ENCODE measurements at regions of chr13 and their contacts with region 1.

Region 1: DNA sequence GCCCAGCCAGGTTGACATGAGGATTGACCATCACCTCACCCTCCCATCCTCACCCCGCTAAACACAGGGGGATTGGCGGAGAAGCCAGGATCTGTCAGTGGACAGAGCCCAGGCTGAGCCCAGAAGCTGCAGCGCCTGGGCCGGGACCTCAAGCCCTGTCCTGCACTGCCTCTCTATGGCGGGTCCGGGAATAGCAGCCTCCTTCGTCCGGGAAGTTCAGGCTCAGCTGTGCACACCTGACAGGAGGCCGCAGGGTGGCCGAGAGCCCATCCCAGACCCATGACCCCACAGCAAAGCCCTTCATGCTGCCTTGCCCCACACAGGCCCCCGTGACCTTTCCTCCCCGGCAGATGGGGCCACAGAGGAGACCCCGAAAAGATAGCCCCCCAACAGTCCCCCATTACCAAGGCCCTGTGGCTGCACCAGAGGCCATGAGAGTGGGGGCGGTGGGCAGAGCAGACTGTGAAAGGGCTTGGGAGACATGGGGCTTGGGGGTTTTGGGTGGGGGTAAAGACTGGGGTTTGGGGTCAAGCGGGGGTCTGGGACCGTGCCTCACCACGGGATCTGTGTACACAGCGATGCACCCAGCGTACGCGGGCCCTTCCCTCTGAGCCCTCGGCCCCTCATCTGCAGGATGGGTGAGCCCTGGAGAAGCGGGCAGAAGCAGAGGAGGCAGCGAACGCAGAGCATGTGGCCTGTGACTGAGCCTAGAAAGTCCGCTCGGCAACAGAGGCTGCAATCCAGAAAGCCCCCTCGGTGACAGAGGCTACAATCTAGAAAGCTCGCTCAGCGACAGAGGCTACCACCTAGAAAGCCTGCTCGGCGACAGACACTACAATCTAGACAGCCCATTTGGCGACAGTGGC is 68.1 kb downstream of the SPACA7 start:
- DNase-seq: no peak
- H3K4me3 ChIP-seq: no peak overlapping the region
- H3K27ac ChIP-seq: no peak overlapping the region
- H3K4me1 ChIP-seq: peaks cover 0 to 12% (median 0%) of the 10 kb centered on the region in 3 donors
- H3K27me3 ChIP-seq: peaks cover 0 to 93% (median 0%) of the 10 kb centered on the region in 4 donors
- CTCF ChIP-seq: peak; percentile 32 to 91 (median 76)
- POLR2A ChIP-seq: no peak

Region 2: DNA sequence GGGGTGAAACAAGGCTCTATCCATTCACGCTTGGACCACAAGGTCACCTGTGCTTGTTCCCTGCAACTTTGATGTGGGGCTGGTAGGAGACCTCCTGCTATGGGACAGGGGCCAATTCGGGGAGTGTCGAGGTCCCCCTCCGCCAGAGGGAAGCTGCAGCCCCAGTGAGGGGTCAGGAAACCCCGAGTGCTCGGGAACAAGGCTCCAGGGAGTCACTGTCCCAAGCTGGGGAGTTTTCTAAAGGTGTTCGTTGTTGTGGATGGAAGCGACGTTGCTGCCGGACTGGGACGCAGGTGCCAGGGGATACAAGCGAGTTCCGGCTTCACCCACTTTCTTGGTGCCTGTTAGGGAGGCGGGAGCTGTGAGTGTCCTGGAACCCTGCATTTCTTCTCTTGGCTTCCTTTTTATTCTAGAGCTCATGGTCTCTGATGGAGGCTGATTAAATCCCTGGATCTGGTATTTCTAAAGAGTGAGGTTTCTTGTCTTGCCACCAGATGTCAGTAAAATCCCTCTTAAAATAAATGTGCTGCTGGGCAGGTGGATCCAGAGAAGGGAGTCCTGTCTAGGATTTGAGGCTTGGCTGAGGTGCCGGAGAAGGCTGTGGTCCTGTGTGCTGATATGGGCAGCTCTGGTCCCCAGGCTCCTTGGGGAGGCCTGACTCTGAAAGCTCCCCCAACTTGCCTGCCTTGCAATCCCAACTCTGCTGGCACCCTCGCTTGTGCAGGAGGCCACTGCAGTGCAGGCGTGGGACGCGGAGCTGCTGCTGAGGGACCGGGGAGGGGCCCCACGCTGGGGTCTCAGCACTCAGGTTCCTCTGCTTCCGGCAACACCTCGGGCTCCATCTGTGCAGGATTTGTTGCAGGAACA is 969.9 kb before region 1 on chr13:
- intact Hi-C with region 1: loop called (anchors 2 kb)
- DNase-seq: no peak
- H3K4me3 ChIP-seq: no peak overlapping the region
- H3K27ac ChIP-seq: no peak overlapping the region
- H3K4me1 ChIP-seq: peaks cover 0 to 18% (median 4%) of the 10 kb centered on the region in 3 donors
- H3K27me3 ChIP-seq: peaks cover 0 to 33% (median 0%) of the 10 kb centered on the region in 4 donors
- CTCF ChIP-seq: peak; percentile 12 to 67 (median 56)
- POLR2A ChIP-seq: no peak

Measured in esophagus squamous epithelium (tissue), 5 donors.